ENCODE measurements at regions of chrX and their contacts with region 1.

Region 1: DNA sequence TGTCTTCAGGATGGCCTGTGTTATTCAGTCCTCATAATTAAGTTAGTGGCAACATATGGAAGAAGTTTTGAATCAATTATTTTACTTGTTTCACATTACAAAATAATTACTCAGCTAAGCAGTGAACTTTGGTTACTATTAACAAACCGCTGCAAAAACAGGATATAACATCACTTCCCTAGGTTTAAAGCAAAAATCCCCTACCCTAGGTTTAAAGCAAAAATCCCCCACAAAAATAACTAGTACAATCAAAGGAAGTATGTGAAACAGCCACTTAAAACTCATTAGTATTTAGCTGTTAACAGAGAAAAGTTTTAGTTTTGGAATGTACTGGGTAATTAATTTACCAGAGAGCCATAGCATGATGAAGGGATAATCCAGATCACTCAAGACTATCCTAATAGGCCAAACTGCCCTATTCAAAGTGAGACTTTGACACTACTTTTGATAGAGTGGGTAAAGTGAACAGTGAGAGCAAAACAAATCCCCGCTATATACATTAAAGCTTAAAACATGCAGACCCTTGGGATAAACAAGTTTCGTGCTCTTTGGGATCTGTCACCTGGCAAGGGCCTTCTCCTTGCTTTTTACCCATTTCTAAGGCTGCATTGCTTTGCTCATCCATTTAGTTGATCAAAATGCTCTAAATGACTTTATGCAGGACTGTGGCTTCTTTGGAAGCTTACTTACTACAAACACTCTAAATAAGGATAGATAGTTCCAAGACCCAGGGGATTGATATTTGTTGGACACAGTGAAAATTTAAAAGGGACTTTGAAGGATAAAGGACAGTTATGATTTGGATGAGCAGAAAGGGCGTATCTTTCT is 36.4 kb upstream of the GPR174 start:
- DNase-seq: peak in 8 of 9 donors; percentile 5 to 79 (median 67)
- ATAC-seq: peak; percentile 97
- H3K4me3 ChIP-seq: peak overlapping the region; percentile 10
- H3K4me3 Mint-ChIP-seq: peak overlapping the region; percentile 50 to 81 (median 70)
- H3K27ac ChIP-seq: peak overlapping the region; percentile 87
- H3K27ac Mint-ChIP-seq: peak overlapping the region; percentile 94 to 99 (median 96)
- H3K4me1 ChIP-seq: peaks cover 27 to 50% of the 10 kb centered on the region in 2 donors
- H3K4me1 Mint-ChIP-seq: peaks cover 13 to 76% (median 64%) of the 10 kb centered on the region in 7 donors
- H3K27me3 ChIP-seq: no peaks in the 10 kb centered on the region
- H3K27me3 Mint-ChIP-seq: no peaks in the 10 kb centered on the region

Region 2: DNA sequence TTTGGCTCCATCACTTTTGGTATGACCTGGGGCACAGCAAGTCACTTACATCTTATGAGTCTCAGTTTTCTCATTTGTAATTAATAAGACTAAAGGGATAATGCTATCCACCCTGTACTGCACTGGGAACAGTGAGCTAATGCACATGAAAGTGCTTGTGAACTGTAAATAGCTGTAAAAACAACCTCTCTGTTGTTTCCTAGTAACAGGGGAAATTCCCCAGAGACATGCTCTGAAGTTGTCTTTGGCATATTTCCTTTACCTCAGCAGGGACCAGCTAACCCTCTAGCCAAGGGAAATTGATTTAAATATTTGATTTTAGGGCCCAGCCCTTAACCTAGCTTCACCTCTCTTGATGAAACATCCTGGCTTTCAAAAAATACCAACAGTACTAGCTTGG is 774.6 kb before region 1 on chrX:
- CTCF ChIA-PET with region 1: no interaction called
- POLR2A ChIA-PET with region 1: no interaction called
- intact Hi-C with region 1: loop called in 1 of 2 experiments (anchors 5 kb)
- DNase-seq: peak in 7 of 9 donors; percentile 33 to 77 (median 55)
- ATAC-seq: peak; percentile 88
- H3K4me3 ChIP-seq: no peak overlapping the region
- H3K4me3 Mint-ChIP-seq: peak overlapping the region in 9 of 10 donors; percentile 3 to 70 (median 19)
- H3K27ac ChIP-seq: peak overlapping the region; percentile 75
- H3K27ac Mint-ChIP-seq: peak overlapping the region; percentile 60 to 99 (median 89)
- H3K4me1 ChIP-seq: peaks cover 9 to 38% of the 10 kb centered on the region in 2 donors
- H3K4me1 Mint-ChIP-seq: peaks cover 22 to 86% (median 67%) of the 10 kb centered on the region in 7 donors
- H3K27me3 ChIP-seq: no peaks in the 10 kb centered on the region
- H3K27me3 Mint-ChIP-seq: no peaks in the 10 kb centered on the region

Region 3: GRCh38 chrX:79096145-79096556 is 12.0 kb before region 1 on chrX:
- CTCF ChIA-PET with region 1: interaction called, 5 read pairs
- POLR2A ChIA-PET with region 1: interaction called, 25 read pairs
- intact Hi-C with region 1: loop called in 1 of 2 experiments (anchors 1 kb)
- DNase-seq: peak in 5 of 9 donors; percentile 3 to 32 (median 21)
- ATAC-seq: peak; percentile 83
- H3K4me3 ChIP-seq: peak overlapping the region; percentile 4
- H3K4me3 Mint-ChIP-seq: peak overlapping the region; percentile 20 to 81 (median 52)
- H3K27ac ChIP-seq: peak overlapping the region; percentile 71
- H3K27ac Mint-ChIP-seq: peak overlapping the region; percentile 68 to 99 (median 91)
- H3K4me1 ChIP-seq: peaks cover 21 to 22% of the 10 kb centered on the region in 2 donors
- H3K4me1 Mint-ChIP-seq: peaks cover 13 to 76% (median 56%) of the 10 kb centered on the region in 7 donors
- H3K27me3 ChIP-seq: no peaks in the 10 kb centered on the region
- H3K27me3 Mint-ChIP-seq: no peaks in the 10 kb centered on the region

Region 4: GRCh38 chrX:79146640-79147390 is 38.7 kb after region 1 on chrX:
- CTCF ChIA-PET with region 1: interaction called, 6 read pairs
- POLR2A ChIA-PET with region 1: interaction called, 98 read pairs
- intact Hi-C with region 1: loop called (anchors 1 to 2 kb)
- DNase-seq: no peak
- ATAC-seq: peak; percentile 64
- H3K4me3 ChIP-seq: peak overlapping the region; percentile 71
- H3K4me3 Mint-ChIP-seq: peak overlapping the region; percentile 66 to 96 (median 92)
- H3K27ac ChIP-seq: peak overlapping the region; percentile 85
- H3K27ac Mint-ChIP-seq: peak overlapping the region; percentile 82 to 98 (median 91)
- H3K4me1 ChIP-seq: peaks cover 10 to 16% of the 10 kb centered on the region in 2 donors
- H3K4me1 Mint-ChIP-seq: peaks cover 10 to 47% (median 28%) of the 10 kb centered on the region in 7 donors
- H3K27me3 ChIP-seq: no peaks in the 10 kb centered on the region
- H3K27me3 Mint-ChIP-seq: no peaks in the 10 kb centered on the region

Region 5: DNA sequence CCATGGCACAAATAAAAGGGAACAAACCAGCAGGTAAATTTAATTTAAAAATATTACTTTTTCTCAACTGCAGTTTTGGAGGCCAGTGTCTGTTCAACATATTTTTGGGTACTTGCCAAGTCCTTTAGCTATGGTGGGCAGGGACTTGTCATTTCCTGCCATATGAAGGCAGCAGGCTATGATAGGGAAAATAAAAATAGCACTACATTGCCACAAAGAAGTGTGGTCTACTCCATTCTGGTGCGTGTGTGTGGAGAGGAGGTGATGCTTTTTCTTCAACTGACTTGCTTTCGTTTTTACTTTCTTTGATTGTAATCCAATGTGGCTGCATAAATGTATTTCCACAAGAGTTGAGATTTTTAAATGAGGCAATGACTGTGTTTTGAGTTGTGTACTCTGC is 53.5 kb after region 1 on chrX:
- CTCF ChIA-PET with region 1: interaction called, 3 read pairs
- POLR2A ChIA-PET with region 1: interaction called, 10 read pairs
- intact Hi-C with region 1: loop called (anchors 1 kb)
- DNase-seq: peak in 8 of 9 donors; percentile 22 to 85 (median 77)
- ATAC-seq: peak; percentile 95
- H3K4me3 ChIP-seq: peak overlapping the region; percentile 52
- H3K4me3 Mint-ChIP-seq: peak overlapping the region; percentile 80 to 96 (median 90)
- H3K27ac ChIP-seq: peak overlapping the region; percentile 76
- H3K27ac Mint-ChIP-seq: peak overlapping the region; percentile 95 to 99 (median 97)
- H3K4me1 ChIP-seq: peaks cover 48 to 50% of the 10 kb centered on the region in 2 donors
- H3K4me1 Mint-ChIP-seq: peaks cover 16 to 79% (median 68%) of the 10 kb centered on the region in 7 donors
- H3K27me3 ChIP-seq: no peaks in the 10 kb centered on the region
- H3K27me3 Mint-ChIP-seq: no peaks in the 10 kb centered on the region

Region 6: DNA sequence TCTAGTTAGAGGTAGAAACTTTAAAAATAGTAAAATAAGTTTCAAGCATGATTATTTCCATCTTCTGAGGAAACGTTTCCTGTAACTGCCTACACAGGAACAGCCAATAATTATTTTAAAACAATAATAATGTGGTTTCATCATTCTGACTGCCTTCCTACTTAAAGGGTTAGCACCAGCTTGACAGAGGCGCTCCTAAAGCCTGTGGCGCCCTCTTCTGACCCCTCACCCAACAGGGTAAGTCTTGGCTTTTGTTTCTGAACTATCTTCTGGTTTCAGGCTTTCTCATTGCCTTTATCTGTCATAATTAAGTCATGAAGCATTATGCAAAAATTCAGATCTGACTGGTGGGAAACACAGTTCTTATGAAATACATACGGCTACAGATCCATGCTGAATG is 162.3 kb after region 1 on chrX:
- CTCF ChIA-PET with region 1: no interaction called
- POLR2A ChIA-PET with region 1: interaction called, 3 read pairs
- intact Hi-C with region 1: loop called in 1 of 2 experiments (anchors 1 kb)
- DNase-seq: peak; percentile 29 to 76 (median 68)
- ATAC-seq: peak; percentile 98
- H3K4me3 ChIP-seq: no peak overlapping the region
- H3K4me3 Mint-ChIP-seq: peak overlapping the region; percentile 17 to 77 (median 56)
- H3K27ac ChIP-seq: peak overlapping the region; percentile 61
- H3K27ac Mint-ChIP-seq: peak overlapping the region in 8 of 9 donors; percentile 84 to 94 (median 90)
- H3K4me1 ChIP-seq: peaks cover 24 to 34% of the 10 kb centered on the region in 2 donors
- H3K4me1 Mint-ChIP-seq: peaks cover 13 to 68% (median 45%) of the 10 kb centered on the region in 7 donors
- H3K27me3 ChIP-seq: no peaks in the 10 kb centered on the region
- H3K27me3 Mint-ChIP-seq: no peaks in the 10 kb centered on the region

Region 7: GRCh38 chrX:79300821-79301220 is 192.7 kb after region 1 on chrX:
- CTCF ChIA-PET with region 1: no interaction called
- POLR2A ChIA-PET with region 1: no interaction called
- intact Hi-C with region 1: no loop called
- DNase-seq: no peak
- ATAC-seq: no peak
- H3K4me3 ChIP-seq: no peak overlapping the region
- H3K4me3 Mint-ChIP-seq: no peak overlapping the region
- H3K27ac ChIP-seq: no peak overlapping the region
- H3K27ac Mint-ChIP-seq: no peak overlapping the region
- H3K4me1 ChIP-seq: no peaks in the 10 kb centered on the region
- H3K4me1 Mint-ChIP-seq: no peaks in the 10 kb centered on the region
- H3K27me3 ChIP-seq: no peaks in the 10 kb centered on the region
- H3K27me3 Mint-ChIP-seq: no peaks in the 10 kb centered on the region

Measured in naive thymus-derived CD4-positive, alpha-beta T cell (primary cell).